HEK293T (cell line): ENCODE measurements at regions of chr14 and their contacts with region 1.

Region 1: GRCh38 chr14:20262642-20263128 is 23.6 kb downstream of the OR11H4 start:
- DNase-seq: no peak

Region 2: DNA sequence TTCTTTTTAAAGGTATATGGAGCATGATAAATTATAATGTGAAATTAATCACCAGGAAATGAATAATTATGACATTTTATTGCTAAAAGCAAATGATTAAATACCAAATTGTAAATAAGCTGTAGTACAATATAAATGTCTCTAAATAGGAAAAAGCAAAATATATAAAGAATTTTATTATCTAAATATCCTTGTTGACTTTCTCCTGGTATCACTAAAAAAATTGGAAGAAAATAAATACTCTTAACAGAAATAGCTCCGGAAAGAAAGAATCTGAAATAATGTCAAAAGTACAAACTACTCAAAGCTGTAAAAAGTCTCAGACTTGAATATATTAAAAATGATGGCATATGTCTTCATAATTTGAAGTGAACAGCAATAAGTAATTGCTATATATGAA is 34.0 kb before region 1 on chr14 and contains the start of gene OR11H7:
- CTCF ChIA-PET with region 1: no interaction called
- POLR2A ChIA-PET with region 1: no interaction called
- DNase-seq: no peak

Region 3: GRCh38 chr14:20247646-20248246 is 14.9 kb before region 1 on chr14:
- CTCF ChIA-PET with region 1: interaction called, 10 read pairs
- POLR2A ChIA-PET with region 1: no interaction called
- DNase-seq: peak; percentile 11